GM13976 (cell line): ENCODE measurements at regions of chr7 and their contacts with region 1.

Region 1: DNA sequence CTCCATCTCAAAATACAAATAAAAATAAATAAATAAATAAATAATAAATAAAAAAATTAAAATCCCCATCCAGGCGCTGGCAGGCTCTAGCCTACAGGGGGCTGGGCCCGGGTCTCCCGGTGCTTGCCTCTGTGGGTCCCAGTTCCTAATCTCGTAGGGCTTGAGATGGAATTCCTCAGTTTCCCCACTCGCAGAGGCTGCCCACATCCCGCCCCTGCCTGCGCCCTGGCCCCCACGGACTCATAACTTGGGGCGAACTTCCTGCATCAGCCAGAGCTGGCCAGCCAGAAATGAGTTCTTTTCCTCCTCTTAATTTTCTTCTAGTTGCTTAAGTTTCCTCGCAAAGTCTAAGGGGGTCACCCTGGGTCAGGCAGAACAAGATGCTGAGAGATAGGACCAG is 22.0 kb upstream of the SRRM3 start:
- DNase-seq: no peak
- CTCF ChIP-seq: no peak

Region 2: GRCh38 chr7:76314042-76314721 is 134.5 kb after region 1 on chr7:
- in situ Hi-C with region 1: loop called (anchors 10 kb)
- DNase-seq: peak; percentile 93
- CTCF ChIP-seq: peak; percentile 100